Calu3 (cell line): ENCODE measurements at regions of chr5 and their contacts with region 1.

Region 1: DNA sequence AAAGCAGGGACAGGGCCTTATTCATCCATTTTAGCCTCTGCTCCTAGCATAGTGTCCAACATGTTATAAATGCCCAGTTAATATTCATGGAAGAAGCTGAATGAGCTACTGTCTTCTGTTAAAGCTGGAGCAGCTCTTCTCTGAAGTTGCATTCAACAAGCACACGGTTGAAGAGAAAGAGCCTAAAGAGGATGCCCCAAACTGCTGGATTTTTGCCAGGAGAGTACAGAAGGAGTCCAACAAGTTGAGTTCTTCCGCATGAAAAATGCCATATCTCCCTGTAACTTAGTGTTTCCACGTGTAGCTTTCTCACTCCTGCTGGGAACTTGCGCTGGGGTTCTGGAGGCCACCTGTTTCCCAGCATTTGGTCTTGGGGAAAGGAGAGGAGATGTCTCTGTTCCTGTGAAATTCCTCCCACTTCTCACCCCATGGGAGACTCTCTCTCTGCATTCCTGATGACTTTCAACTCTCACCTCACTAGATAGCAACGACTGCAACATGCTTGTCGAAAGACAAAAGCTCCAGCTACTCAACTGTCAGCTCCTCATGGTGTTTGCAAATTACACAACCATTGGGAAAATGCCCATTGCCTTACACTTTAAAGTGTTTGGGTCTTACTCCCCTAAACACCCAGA is 122.8 kb downstream of the KIF4B start:
- DNase-seq: no peak
- H3K4me3 Mint-ChIP-seq: no peak overlapping the region
- H3K27ac Mint-ChIP-seq: no peak overlapping the region
- H3K4me1 Mint-ChIP-seq: no peaks in the 10 kb centered on the region
- H3K27me3 Mint-ChIP-seq: peaks cover 78% of the 10 kb centered on the region
- CTCF ChIP-seq: no peak

Region 2: GRCh38 chr5:154647114-154647760 is 489.1 kb before region 1 on chr5:
- CTCF ChIA-PET with region 1: no interaction called
- intact Hi-C with region 1: no loop called
- DNase-seq: peak; percentile 55
- H3K4me3 Mint-ChIP-seq: peak overlapping the region; percentile 77
- H3K27ac Mint-ChIP-seq: peak overlapping the region; percentile 49
- H3K4me1 Mint-ChIP-seq: peaks cover 17% of the 10 kb centered on the region
- H3K27me3 Mint-ChIP-seq: peaks cover 19% of the 10 kb centered on the region
- CTCF ChIP-seq: no peak

Region 3: GRCh38 chr5:155069961-155070360 is 66.4 kb before region 1 on chr5:
- CTCF ChIA-PET with region 1: no interaction called
- intact Hi-C with region 1: no loop called
- DNase-seq: no peak
- H3K4me3 Mint-ChIP-seq: no peak overlapping the region
- H3K27ac Mint-ChIP-seq: no peak overlapping the region
- H3K4me1 Mint-ChIP-seq: no peaks in the 10 kb centered on the region
- H3K27me3 Mint-ChIP-seq: peaks cover 23% of the 10 kb centered on the region
- CTCF ChIP-seq: no peak

Region 4: GRCh38 chr5:155189981-155190380 is 53.6 kb after region 1 on chr5:
- CTCF ChIA-PET with region 1: no interaction called
- intact Hi-C with region 1: no loop called
- DNase-seq: peak; percentile 36
- H3K4me3 Mint-ChIP-seq: no peak overlapping the region
- H3K27ac Mint-ChIP-seq: peak overlapping the region; percentile 10
- H3K4me1 Mint-ChIP-seq: peaks cover 9% of the 10 kb centered on the region
- H3K27me3 Mint-ChIP-seq: no peaks in the 10 kb centered on the region
- CTCF ChIP-seq: no peak

Region 5: DNA sequence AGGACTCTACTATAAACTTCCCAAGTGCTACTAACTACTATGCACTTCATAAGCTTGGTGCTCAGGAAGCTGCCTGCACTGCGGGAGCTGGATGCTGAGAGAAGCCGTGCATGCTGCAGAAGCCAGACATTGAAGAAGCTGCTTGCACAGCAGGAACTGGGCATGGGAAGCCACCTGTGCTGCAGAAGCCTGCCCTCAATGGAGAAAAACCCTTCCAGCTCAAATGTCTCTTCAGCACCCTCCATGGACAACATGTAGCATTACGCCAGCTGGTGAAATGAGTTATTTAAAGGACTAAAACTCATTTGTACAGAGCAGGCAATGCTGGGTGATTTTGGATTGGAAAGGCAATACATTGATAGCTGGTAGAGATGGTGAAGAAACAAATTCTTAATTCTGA is 124.5 kb after region 1 on chr5:
- CTCF ChIA-PET with region 1: interaction called, 4 read pairs
- intact Hi-C with region 1: loop called (anchors 5 kb)
- DNase-seq: peak; percentile 2
- H3K4me3 Mint-ChIP-seq: no peak overlapping the region
- H3K27ac Mint-ChIP-seq: no peak overlapping the region
- H3K4me1 Mint-ChIP-seq: no peaks in the 10 kb centered on the region
- H3K27me3 Mint-ChIP-seq: no peaks in the 10 kb centered on the region
- CTCF ChIP-seq: no peak

Region 6: DNA sequence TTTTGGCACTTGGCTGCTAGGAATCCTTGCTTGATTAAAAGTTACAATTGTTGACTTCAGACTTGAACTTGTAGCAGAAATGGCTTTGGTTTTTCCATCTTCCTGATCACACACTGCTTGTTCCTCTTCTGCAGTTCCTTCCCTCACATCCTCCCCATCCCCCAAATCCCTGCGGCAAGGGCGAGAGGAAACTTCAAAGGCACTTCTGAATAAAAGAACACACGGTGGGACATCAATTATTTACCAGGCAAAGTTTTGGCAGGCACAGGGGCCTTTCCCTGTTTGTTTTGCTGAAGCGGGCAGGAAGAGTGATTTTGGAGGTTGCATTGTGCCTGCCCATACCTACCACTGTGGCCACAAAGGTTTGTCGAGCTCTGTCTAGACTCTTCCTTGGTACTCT is 138.2 kb after region 1 on chr5:
- CTCF ChIA-PET with region 1: no interaction called
- intact Hi-C with region 1: no loop called
- DNase-seq: no peak
- H3K4me3 Mint-ChIP-seq: no peak overlapping the region
- H3K27ac Mint-ChIP-seq: no peak overlapping the region
- H3K4me1 Mint-ChIP-seq: no peaks in the 10 kb centered on the region
- H3K27me3 Mint-ChIP-seq: peaks cover 14% of the 10 kb centered on the region
- CTCF ChIP-seq: no peak